Gastrocnemius medialis (tissue), 4 donors: ENCODE measurements at regions of chr3 and their contacts with region 1.

Region 1: DNA sequence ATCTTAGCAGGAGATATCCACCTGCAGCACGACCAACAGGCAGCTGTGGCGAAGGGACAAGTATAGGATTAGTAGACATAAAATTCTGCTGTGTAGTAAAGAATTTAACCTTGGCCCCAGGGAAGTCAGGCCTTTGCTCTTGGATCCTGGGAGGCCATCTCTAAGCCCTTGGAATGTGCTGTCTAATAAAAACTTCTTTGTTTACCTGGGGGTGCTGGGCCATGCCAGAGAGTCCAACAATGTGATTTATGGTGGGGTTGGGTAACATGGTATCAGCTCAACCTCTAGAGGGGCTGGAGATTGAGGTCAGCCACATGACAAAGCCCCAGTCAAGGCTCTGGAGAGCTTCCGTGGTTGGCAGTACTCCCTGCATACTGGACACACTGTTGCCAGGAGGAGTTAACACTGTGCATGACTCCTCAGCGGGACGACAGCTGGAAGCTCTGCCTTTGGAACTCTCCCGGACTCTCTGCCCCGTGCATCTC is 52.4 kb downstream of the HEG1 start:
- DNase-seq: peak; percentile 85 to 92
- ATAC-seq: peak; percentile 97 to 98
- H3K4me3 ChIP-seq: peak overlapping the region in 1 of 4 donors; percentile 24
- H3K27ac ChIP-seq: peak overlapping the region; percentile 46 to 75 (median 59)
- H3K4me1 ChIP-seq: peaks cover 21 to 46% of the 10 kb centered on the region in 2 donors
- H3K27me3 ChIP-seq: no peaks in the 10 kb centered on the region
- CTCF ChIP-seq: no peak
- POLR2A ChIP-seq: no peak

Region 2: DNA sequence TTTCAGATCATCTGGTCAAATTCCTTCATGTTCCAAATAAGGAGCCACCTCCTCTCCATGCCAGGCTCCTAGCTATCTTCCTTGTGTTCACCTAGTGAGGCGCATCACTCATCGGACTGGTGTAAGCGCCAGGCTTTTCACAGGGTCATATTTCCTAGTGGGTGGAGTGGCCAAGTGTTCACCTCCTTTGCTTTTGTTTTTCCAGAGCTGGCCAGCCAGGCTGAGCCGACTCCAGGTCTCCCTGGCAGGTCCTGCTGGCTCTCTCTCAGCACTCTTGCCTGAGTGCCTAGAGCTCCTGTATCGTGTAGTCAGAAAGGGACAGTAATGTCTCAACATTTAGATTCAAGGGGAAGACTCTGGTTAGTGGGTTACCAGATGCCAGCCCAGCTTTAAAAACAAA is 21.4 kb after region 1 on chr3:
- in situ Hi-C with region 1: no loop called
- intact Hi-C with region 1: loop called (anchors 1 kb)
- DNase-seq: peak; percentile 82 to 91
- ATAC-seq: peak; percentile 98 to 99
- H3K4me3 ChIP-seq: no peak overlapping the region
- H3K27ac ChIP-seq: peak overlapping the region; percentile 40 to 75 (median 58)
- H3K4me1 ChIP-seq: peaks cover 17 to 30% of the 10 kb centered on the region in 2 donors
- H3K27me3 ChIP-seq: no peaks in the 10 kb centered on the region
- CTCF ChIP-seq: no peak
- POLR2A ChIP-seq: no peak

Region 3: DNA sequence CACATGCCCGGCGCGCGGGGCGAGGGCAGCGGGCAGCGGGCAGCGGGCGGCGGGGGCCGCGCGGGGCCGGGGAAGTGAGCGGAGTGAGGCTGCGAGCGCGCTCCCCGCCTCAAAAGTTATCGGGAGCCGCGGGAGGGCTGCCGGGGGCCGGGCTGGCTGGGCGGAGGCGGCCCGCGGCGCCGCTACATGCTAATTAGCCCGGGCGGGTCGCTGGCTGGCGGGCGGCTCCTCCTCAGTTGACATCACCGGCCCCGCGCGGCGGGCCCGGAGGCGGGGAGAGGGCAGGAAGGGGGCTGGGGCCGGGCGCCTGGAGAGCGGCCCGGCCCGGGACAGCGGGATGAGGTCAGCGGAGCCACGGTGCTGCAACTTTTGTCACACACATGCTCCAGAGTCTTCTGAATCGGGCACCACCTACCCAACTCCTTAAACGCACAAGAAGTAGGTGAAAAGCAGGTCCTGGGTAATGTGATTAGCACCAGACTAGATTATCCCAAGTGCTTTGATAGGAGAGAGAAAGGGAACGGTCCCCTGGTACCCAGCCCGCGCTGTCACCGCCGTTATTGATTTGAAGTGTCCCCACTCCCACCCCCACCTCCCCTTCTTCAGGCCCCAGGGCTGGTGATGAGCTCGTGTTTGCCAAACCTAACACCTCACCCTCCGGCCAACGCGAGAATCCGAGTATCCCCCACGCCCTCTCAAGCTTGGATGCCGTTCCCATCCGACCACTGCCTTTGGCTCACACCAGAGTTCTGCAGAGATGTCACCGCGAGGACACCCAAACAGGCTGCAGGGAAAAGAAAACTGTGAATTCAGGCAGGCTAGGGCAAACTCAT is 52.7 kb after region 1 on chr3 and contains the start of gene HEG1:
- in situ Hi-C with region 1: no loop called
- intact Hi-C with region 1: loop called (anchors 1 kb)
- DNase-seq: peak; percentile 80 to 89
- ATAC-seq: peak; percentile 65 to 73
- H3K4me3 ChIP-seq: peak within 1 kb of the TSS; percentile 69 to 76 (median 73)
- H3K27ac ChIP-seq: peak within 1 kb of the TSS; percentile 84 to 89 (median 89)
- H3K4me1 ChIP-seq: peaks cover 41 to 57% of the 10 kb centered on the region in 2 donors
- H3K27me3 ChIP-seq: no peaks in the 10 kb centered on the region
- CTCF ChIP-seq: no peak
- POLR2A ChIP-seq: peak; percentile 75 to 85
- total RNA-seq, gene HEG1: 9.8 to 27.1 (median 17.6) TPM

Region 4: GRCh38 chr3:125079675-125080045 is 76.2 kb after region 1 on chr3:
- in situ Hi-C with region 1: no loop called
- intact Hi-C with region 1: loop called (anchors 1 kb)
- DNase-seq: no peak
- ATAC-seq: peak; percentile 89 to 92
- H3K4me3 ChIP-seq: no peak overlapping the region
- H3K27ac ChIP-seq: peak overlapping the region; percentile 51 to 73 (median 60)
- H3K4me1 ChIP-seq: peaks cover 0 to 4% of the 10 kb centered on the region in 2 donors
- H3K27me3 ChIP-seq: no peaks in the 10 kb centered on the region
- CTCF ChIP-seq: no peak
- POLR2A ChIP-seq: no peak

Region 5: GRCh38 chr3:125585595-125586223 is 582.3 kb after region 1 on chr3:
- in situ Hi-C with region 1: no loop called
- intact Hi-C with region 1: loop called (anchors 5 kb)
- DNase-seq: no peak
- ATAC-seq: peak; percentile 72 to 78
- H3K4me3 ChIP-seq: no peak overlapping the region
- H3K27ac ChIP-seq: peak overlapping the region; percentile 37 to 95 (median 92)
- H3K4me1 ChIP-seq: peaks cover 52 to 65% of the 10 kb centered on the region in 2 donors
- H3K27me3 ChIP-seq: no peaks in the 10 kb centered on the region
- CTCF ChIP-seq: peak; percentile 71 to 85 (median 78)
- POLR2A ChIP-seq: no peak